Mammary epithelial cell (primary cell): ENCODE measurements at regions of chr5 and their contacts with region 1.

Region 1: DNA sequence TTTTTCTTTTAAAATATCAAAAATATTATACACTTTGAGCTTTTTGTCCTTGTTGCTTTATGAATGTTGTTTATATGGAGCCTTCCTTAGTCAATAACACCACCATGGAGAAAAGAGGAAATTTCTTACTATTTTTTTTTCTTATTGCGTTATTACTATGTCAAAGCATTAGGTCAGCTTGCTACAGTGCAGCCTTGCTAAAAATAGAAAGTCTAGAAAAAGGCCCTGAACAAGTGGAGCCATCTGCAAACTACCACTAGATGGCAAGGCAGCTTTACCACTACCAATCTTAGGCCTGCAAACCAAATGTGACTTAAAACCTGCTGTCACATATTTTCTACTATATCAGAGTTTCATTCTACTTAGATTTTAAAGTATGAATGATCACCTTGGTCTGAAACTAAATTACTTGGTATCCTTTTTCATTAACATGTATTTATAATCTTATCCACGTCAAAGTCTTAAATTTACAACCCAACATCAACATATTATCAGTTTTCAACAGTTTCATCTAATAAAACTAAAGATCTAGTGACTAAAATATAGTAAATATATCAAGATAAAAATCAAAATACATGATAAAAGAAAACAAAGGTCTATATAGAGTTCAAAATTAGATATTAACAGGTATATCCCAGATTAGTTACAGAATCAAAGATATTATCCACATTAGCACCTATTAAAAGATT is 113.1 kb upstream of the ACOT12 start:
- DNase-seq: peak; percentile 66
- H3K4me3 ChIP-seq: no peak overlapping the region
- H3K27ac ChIP-seq: no peak overlapping the region
- H3K4me1 ChIP-seq: no peaks in the 10 kb centered on the region
- H3K27me3 ChIP-seq: no peaks in the 10 kb centered on the region
- CTCF ChIP-seq: peak; percentile 87 to 88

Region 2: GRCh38 chr5:81288021-81288433 is 219.0 kb before region 1 on chr5:
- CTCF ChIA-PET with region 1: no interaction called
- dilution Hi-C with region 1: no loop called
- in situ Hi-C with region 1: no loop called
- intact Hi-C with region 1: no loop called
- DNase-seq: no peak
- H3K4me3 ChIP-seq: no peak overlapping the region
- H3K27ac ChIP-seq: no peak overlapping the region
- H3K4me1 ChIP-seq: peaks cover 10% of the 10 kb centered on the region
- H3K27me3 ChIP-seq: no peaks in the 10 kb centered on the region
- CTCF ChIP-seq: no peak

Region 3: DNA sequence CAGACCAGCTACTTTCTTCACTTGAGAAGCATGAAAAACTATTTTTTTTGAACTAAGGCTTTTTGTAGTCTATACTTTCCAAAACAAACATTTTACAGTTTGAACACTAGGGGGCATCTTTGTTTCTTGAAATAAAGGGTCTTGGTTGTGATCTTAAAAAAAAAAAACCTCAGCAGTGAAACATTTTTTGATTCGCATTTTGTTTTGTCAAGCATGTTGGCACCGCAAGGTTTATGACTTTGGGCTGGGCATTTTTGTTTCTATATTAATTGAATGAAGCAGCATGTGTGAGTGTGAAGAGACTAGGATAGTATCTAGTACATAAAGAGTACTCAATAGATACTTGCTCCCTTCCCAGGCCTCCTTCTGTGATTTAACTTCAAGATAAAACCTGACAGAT is 81.5 kb before region 1 on chr5:
- CTCF ChIA-PET with region 1: no interaction called
- dilution Hi-C with region 1: no loop called
- in situ Hi-C with region 1: no loop called
- intact Hi-C with region 1: loop called (anchors 2 kb)
- DNase-seq: peak; percentile 27
- H3K4me3 ChIP-seq: no peak overlapping the region
- H3K27ac ChIP-seq: no peak overlapping the region
- H3K4me1 ChIP-seq: peaks cover 7% of the 10 kb centered on the region
- H3K27me3 ChIP-seq: no peaks in the 10 kb centered on the region
- CTCF ChIP-seq: peak; percentile 44 to 48

Region 4: DNA sequence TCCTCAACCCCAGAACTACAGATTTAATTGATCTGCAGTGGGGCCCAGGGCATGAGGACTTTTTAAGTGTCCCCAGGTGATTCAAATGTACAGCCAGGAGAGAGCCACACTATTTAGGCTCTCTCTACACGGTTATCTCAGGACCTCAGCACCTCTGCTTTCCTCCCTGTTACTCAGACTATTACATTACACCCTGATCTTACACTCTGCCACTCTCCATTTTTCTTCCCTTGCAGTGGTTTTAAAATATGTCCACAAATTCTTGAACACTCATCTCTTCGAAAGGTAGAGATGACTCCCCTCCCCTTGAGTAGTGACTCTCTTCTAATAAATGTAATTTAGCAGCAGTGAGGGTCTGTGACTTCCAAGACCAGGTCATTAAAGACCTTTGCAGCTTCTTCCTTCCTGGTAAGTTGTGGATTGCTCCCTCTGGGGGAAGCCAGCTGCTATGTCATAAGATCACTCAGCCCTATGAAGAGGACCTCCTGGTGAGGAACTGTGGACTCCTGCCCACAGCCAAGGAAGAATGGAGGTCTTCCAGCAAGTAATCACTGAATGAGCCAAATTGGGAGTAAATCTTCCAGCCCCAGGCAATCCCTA is 331.4 kb after region 1 on chr5:
- CTCF ChIA-PET with region 1: no interaction called
- dilution Hi-C with region 1: no loop called
- in situ Hi-C with region 1: loop called (anchors 10 to 25 kb)
- intact Hi-C with region 1: loop called (anchors 1 kb)
- DNase-seq: no peak
- H3K4me3 ChIP-seq: no peak overlapping the region
- H3K27ac ChIP-seq: no peak overlapping the region
- H3K4me1 ChIP-seq: peaks cover 3% of the 10 kb centered on the region
- H3K27me3 ChIP-seq: no peaks in the 10 kb centered on the region
- CTCF ChIP-seq: peak; percentile 40 to 69

Region 5: DNA sequence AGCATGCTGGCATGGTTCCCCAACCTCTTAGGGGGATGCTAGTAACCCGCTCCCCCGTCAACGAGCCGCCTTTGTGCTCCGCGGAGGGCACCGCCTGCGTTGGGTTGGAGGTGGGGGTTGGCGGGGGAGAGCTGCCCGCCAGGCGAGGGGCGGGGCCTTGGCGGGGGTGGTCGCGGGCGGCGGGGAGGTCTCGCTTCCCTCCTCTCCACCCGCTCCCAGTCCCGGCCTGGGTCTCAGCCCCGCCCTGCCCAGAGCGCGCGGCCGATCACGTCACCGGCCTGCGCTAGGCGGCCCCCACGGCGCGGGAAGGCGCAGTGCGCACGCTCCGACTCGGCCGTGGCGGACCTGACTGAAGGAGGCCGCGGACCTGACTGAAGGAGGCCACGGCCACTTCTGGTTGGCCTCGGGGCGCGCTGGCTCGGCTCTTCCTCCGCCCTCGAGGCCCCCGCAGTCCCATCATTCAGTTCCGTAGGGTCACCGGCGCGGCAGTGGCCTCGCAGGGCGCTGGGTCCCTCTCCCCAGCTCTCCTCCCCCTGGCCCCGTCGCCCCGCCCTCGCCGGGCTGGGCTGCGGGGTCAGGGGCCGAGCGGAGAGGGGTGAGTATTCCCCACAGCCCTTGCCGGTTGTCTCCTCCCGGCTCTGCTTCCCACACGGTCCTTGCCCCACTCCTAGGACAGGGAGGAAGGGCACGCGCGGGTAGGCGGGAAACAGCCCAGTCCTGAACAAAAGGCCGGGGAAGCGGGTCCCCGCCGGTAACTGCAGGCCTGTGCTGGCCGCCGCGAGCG is 464.9 kb after region 1 on chr5 and contains the start of gene ATG10:
- CTCF ChIA-PET with region 1: no interaction called
- dilution Hi-C with region 1: no loop called
- in situ Hi-C with region 1: no loop called
- intact Hi-C with region 1: loop called (anchors 10 kb)
- DNase-seq: peak; percentile 86
- H3K4me3 ChIP-seq: peak within 1 kb of the TSS; percentile 65 to 81 (median 65)
- H3K27ac ChIP-seq: peak within 1 kb of the TSS; percentile 92
- H3K4me1 ChIP-seq: peaks cover 4% of the 10 kb centered on the region
- H3K27me3 ChIP-seq: no peaks in the 10 kb centered on the region
- CTCF ChIP-seq: no peak
- total RNA-seq, gene ATG10: 7.2 to 12.2 TPM

Region 6: GRCh38 chr5:82225525-82226172 is 718.6 kb after region 1 on chr5:
- CTCF ChIA-PET with region 1: no interaction called
- dilution Hi-C with region 1: no loop called
- in situ Hi-C with region 1: no loop called
- intact Hi-C with region 1: loop called (anchors 1 kb)
- DNase-seq: peak; percentile 60
- H3K4me3 ChIP-seq: no peak overlapping the region
- H3K27ac ChIP-seq: no peak overlapping the region
- H3K4me1 ChIP-seq: no peaks in the 10 kb centered on the region
- H3K27me3 ChIP-seq: no peaks in the 10 kb centered on the region
- CTCF ChIP-seq: peak; percentile 87 to 94